BJ (cell line): ENCODE measurements at regions of chr6 and their contacts with region 1.

Region 1: DNA sequence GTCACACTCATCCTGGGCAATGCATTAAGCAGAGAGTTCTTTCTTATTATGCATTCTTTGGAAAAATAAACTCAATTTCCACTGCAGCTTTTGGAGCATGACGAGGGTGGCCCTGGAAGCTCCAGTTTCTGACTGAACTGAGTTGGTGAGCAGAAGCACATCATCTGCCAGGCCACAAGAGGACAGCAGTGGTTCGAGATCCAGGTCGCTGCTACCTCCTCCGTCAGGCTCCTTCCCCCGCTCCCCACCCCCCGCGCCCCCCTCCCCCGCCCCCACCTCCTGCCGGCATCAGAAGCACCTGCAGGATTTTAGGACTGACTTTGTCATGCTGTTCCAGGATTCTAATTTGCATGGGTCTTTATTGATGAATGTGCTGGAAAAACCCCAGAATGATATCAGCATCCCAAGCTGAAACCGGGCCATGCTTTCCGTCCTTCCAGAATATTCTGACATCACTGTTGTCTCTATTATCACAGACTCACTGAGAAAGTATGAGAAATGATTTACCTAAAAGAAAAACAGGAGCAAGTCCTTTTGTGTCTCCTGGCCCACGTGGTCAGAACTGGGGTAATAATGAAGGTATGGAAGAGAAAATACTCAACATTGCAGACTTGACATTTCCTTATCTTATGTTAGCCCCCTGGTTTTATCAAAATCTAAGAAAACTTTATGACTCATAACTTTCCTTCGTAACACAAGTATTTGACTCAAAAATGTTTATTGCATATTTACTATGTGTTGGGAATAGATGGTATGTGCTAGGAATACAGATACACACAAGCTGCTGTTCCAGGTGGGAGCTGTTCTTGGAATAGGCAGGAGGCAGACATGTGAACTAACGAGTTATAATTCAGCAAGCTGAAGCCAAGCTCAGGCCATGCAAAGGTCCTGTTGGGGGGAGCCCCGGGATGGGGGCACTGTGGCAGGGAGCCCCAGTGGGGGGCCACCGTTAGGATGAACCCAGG is 220.2 kb upstream of the EXOC2 start:
- DNase-seq: no peak
- H3K4me3 ChIP-seq: no peak overlapping the region
- H3K27me3 ChIP-seq: peaks cover 8% of the 10 kb centered on the region
- CTCF ChIP-seq: peak; percentile 78

Region 2: GRCh38 chr6:1311400-1312202 is 398.4 kb after region 1 on chr6 and contains the start of gene FOXQ1:
- CTCF ChIA-PET with region 1: interaction called, 14 read pairs
- POLR2A ChIA-PET with region 1: no interaction called
- DNase-seq: no peak
- H3K4me3 ChIP-seq: peak within 1 kb of the TSS; percentile 53
- H3K27me3 ChIP-seq: peaks cover 9% of the 10 kb centered on the region
- CTCF ChIP-seq: no peak
- polyA plus RNA-seq, gene FOXQ1: 0.23 and 0.31 TPM in 2 replicates

Region 3: GRCh38 chr6:1381481-1382330 is 468.6 kb after region 1 on chr6:
- CTCF ChIA-PET with region 1: interaction called, 28 read pairs
- POLR2A ChIA-PET with region 1: no interaction called
- DNase-seq: no peak
- H3K4me3 ChIP-seq: peak overlapping the region; percentile 46
- H3K27me3 ChIP-seq: peaks cover 14% of the 10 kb centered on the region
- CTCF ChIP-seq: peak; percentile 57; the same call in 1 of the 2 replicates